CD8-positive, alpha-beta T cell (primary cell): ENCODE measurements at regions of chrX and their contacts with region 1.

Region 1: DNA sequence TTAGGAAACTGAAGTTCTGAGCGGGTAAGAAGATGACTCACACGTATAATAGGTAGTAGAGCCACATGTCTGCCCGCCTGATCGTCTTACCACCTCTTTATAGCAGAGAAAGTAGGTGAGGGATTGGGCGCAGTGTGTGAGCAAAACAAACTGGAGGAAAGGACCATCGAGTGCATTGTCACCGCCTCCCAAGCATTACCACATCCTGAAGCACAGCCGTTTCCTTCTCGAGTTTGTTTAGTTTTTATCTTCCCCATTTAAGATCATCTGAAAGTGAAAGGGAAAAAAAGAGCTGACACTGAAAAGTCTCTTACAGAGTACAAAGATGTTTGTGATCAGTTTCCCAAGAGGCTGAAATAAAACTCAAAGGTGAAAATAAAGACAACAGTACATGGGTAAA is 14.8 kb downstream of the PDK3 start:
- DNase-seq: peak; percentile 47 to 94 (median 73)
- ATAC-seq: peak; percentile 94
- H3K4me3 ChIP-seq: peak overlapping the region; percentile 38 to 55
- H3K4me3 Mint-ChIP-seq: peak overlapping the region; percentile 80
- H3K27ac ChIP-seq: peak overlapping the region; percentile 78 to 95
- H3K27ac Mint-ChIP-seq: peak overlapping the region; percentile 97
- H3K4me1 ChIP-seq: peaks cover 62% of the 10 kb centered on the region
- H3K4me1 Mint-ChIP-seq: peaks cover 75% of the 10 kb centered on the region
- H3K27me3 ChIP-seq: no peaks in the 10 kb centered on the region
- H3K27me3 Mint-ChIP-seq: no peaks in the 10 kb centered on the region
- CTCF ChIP-seq: no peak

Region 2: GRCh38 chrX:24395775-24396174 is 84.1 kb before region 1 on chrX:
- CTCF ChIA-PET with region 1: interaction called, 6 read pairs
- POLR2A ChIA-PET with region 1: interaction called, 10 read pairs
- intact Hi-C with region 1: no loop called
- DNase-seq: peak in 6 of 9 experiments; percentile 3 to 78 (median 42)
- ATAC-seq: peak; percentile 88
- H3K4me3 ChIP-seq: no peak overlapping the region
- H3K4me3 Mint-ChIP-seq: no peak overlapping the region
- H3K27ac ChIP-seq: no peak overlapping the region
- H3K27ac Mint-ChIP-seq: no peak overlapping the region
- H3K4me1 ChIP-seq: no peaks in the 10 kb centered on the region
- H3K4me1 Mint-ChIP-seq: peaks cover 2% of the 10 kb centered on the region
- H3K27me3 ChIP-seq: no peaks in the 10 kb centered on the region
- H3K27me3 Mint-ChIP-seq: peaks cover 17% of the 10 kb centered on the region
- CTCF ChIP-seq: peak; percentile 60

Region 3: DNA sequence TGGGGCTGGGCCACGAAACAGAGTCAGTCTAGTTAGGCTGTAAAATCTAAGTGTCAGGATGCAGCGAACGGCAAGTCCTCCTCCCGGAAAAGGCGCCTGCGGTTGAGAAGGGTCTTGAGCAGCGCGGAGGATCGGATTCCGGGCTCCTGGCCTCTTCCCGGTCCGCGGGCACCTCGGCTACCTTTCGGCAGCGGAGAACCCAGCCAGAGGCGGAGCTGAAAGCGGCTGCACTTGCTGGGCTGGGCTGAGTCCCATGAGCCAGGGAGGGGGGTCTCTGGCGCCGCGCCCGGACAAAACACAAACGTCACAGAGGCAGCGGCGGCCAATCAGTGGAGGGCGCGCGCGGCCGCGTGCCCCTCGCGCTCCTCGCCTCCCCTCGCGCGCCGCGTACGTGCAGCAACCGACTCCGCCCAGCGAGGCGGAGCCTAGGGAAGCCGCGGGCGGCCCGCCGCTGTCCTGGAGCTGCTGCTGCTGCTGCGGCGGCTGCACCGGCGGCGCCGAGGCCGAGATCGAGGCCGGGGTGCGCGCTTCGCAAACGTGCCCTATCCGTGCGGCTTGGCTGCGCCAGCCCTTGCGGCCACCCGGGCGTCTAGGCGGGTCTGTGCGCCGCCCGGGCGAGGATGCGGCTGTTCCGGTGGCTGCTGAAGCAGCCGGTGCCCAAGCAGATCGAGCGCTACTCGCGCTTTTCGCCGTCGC is 14.9 kb before region 1 on chrX and contains the start of gene PDK3:
- CTCF ChIA-PET with region 1: interaction called, 3 read pairs
- POLR2A ChIA-PET with region 1: interaction called, 36 read pairs
- intact Hi-C with region 1: loop called (anchors 1 kb)
- DNase-seq: peak; percentile 77 to 94 (median 87)
- ATAC-seq: peak; percentile 94
- H3K4me3 ChIP-seq: peak within 1 kb of the TSS; percentile 60 to 81
- H3K4me3 Mint-ChIP-seq: peak within 1 kb of the TSS; percentile 83
- H3K27ac ChIP-seq: peak within 1 kb of the TSS; percentile 77 to 86
- H3K27ac Mint-ChIP-seq: peak within 1 kb of the TSS; percentile 94
- H3K4me1 ChIP-seq: peaks cover 36% of the 10 kb centered on the region
- H3K4me1 Mint-ChIP-seq: peaks cover 39% of the 10 kb centered on the region
- H3K27me3 ChIP-seq: no peaks in the 10 kb centered on the region
- H3K27me3 Mint-ChIP-seq: no peaks in the 10 kb centered on the region
- CTCF ChIP-seq: no peak
- total RNA-seq, gene PDK3: 13.3 to 16.8 TPM

Region 4: DNA sequence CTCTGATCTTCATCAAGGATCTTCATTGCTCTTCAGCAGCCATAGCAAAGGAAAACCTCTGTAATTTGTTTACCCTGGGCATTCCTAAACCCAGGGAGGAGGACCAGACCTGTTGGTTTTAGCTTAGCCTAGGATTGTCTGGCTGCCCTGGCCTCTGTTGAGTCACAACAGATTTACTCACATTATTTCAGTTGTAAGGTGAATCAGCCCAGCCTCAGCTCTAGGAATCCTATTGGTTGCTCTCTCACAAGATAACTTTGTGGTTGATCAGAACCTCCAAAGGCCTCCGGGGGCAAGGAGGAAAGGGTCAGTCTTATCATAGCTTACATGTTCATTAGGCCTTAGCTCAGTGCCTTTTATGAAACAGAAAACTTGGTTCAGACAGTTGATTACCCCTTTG is 26.1 kb after region 1 on chrX:
- CTCF ChIA-PET with region 1: no interaction called
- POLR2A ChIA-PET with region 1: no interaction called
- intact Hi-C with region 1: no loop called
- DNase-seq: no peak
- ATAC-seq: no peak
- H3K4me3 ChIP-seq: no peak overlapping the region
- H3K4me3 Mint-ChIP-seq: no peak overlapping the region
- H3K27ac ChIP-seq: no peak overlapping the region
- H3K27ac Mint-ChIP-seq: no peak overlapping the region
- H3K4me1 ChIP-seq: no peaks in the 10 kb centered on the region
- H3K4me1 Mint-ChIP-seq: peaks cover 5% of the 10 kb centered on the region
- H3K27me3 ChIP-seq: no peaks in the 10 kb centered on the region
- H3K27me3 Mint-ChIP-seq: no peaks in the 10 kb centered on the region
- CTCF ChIP-seq: no peak